Activated CD4-positive, alpha-beta memory T cell treated with anti-CD3 and anti-CD28 coated beads for 36 hours (primary cell): ENCODE measurements at regions of chr10 and their contacts with region 1.

Region 1: GRCh38 chr10:113563306-113564088 is 10.6 kb downstream of the HABP2 start:
- DNase-seq: peak; percentile 78
- H3K4me3 Mint-ChIP-seq: peak overlapping the region; percentile 54
- H3K27ac Mint-ChIP-seq: no peak overlapping the region
- H3K4me1 Mint-ChIP-seq: no peaks in the 10 kb centered on the region
- H3K27me3 Mint-ChIP-seq: peaks cover 4% of the 10 kb centered on the region

Region 2: DNA sequence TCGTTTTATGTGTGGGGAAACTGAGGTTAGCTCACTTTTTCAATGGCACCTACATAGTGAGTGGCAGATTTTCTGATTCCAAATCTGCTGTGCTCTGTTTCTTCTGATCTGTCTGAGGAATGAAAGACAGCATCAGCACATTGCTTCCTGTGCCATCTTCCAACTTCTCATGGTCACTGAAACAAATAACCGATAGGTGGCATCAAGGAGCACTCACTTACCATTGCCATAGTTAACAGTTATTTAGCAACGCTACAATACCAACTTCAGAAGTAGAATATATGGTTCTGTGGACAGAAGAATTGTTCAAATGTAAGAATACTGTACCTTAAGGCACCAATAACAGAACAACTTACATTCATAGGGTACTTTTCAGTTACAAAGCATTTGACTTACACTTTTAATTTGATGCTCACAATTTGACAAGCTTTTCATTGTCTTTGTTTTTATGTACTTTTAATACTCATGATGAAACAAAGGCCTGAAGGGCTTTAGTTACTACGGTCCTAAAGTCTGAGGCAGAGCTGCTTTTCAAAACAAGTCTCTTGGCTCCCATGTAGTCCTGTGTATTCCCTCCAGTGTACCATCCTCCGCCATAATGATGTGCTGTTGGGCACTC is 842.3 kb before region 1 on chr10:
- CTCF ChIA-PET with region 1: no interaction called
- POLR2A ChIA-PET with region 1: no interaction called
- intact Hi-C with region 1: loop called (anchors 10 kb)
- DNase-seq: no peak
- H3K4me3 Mint-ChIP-seq: no peak overlapping the region
- H3K27ac Mint-ChIP-seq: no peak overlapping the region
- H3K4me1 Mint-ChIP-seq: no peaks in the 10 kb centered on the region
- H3K27me3 Mint-ChIP-seq: no peaks in the 10 kb centered on the region

Region 3: DNA sequence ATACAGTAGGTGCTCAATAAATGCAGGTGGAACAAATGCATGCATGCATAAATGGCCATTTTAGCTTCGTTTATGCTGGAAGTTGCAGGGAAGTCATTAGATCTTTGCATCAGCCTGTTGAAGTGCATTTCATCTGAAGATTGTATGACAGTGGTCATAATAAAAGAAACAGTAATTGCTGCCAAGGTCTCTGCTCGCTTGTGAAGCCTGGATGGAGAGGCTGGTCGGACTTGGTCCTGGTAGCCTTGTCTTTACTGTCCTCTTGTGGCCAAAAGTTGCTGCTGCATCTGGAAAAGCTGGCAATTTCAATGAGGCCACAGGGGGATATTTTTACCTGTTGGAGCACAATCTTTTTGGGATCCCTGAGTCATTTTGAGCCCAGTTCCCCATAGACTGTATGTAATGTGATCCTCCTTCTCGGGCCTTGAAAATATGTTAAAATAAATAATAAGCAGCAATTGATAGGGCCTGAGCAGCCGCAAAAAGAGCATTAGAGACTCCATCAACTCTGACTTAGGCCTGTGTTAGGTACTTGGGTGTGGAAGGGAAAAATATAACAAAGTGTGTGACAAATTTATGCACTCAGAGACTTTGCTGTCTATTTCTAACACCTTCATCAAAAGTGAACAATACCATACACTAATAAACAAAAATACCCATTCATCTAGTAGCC is 42.2 kb before region 1 on chr10:
- CTCF ChIA-PET with region 1: interaction called, 7 read pairs
- POLR2A ChIA-PET with region 1: no interaction called
- intact Hi-C with region 1: loop called (anchors 1 kb)
- DNase-seq: peak; percentile 43
- H3K4me3 Mint-ChIP-seq: no peak overlapping the region
- H3K27ac Mint-ChIP-seq: no peak overlapping the region
- H3K4me1 Mint-ChIP-seq: no peaks in the 10 kb centered on the region
- H3K27me3 Mint-ChIP-seq: peaks cover 4% of the 10 kb centered on the region

Region 4: DNA sequence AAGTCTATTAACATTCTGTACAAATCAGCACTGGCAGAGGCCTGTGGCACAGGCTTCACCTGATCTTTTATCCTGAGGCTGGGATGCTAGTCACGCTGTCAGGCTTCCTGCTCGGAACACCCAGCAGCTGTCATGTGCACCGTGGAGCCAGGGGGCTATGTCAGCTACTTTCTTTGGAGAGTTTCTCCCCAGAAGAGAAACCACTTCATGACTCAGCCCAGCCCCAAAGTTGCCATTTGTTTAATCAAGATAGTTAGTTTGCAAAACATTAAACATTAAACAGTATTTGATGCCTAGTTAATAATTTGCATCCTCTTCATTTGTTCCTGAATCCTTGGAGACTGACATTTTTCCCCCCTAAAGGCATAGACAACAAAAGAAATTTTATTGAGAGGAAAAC is 10.8 kb before region 1 on chr10 and contains the start of gene HABP2:
- CTCF ChIA-PET with region 1: interaction called, 12 read pairs
- POLR2A ChIA-PET with region 1: no interaction called
- intact Hi-C with region 1: no loop called
- DNase-seq: no peak
- H3K4me3 Mint-ChIP-seq: no peak within 1 kb of the TSS
- H3K27ac Mint-ChIP-seq: no peak within 1 kb of the TSS
- H3K4me1 Mint-ChIP-seq: no peaks in the 10 kb centered on the region
- H3K27me3 Mint-ChIP-seq: peaks cover 20% of the 10 kb centered on the region
- total RNA-seq, gene HABP2: not detected